Activated CD8-positive, alpha-beta memory T cell treated with anti-CD3 and anti-CD28 coated beads, Interleukin-2, amount 10 ng/mL, durations not matched to agents 7 days and 5 days (primary cell): ENCODE measurements at regions of chr1 and their contacts with region 1.

Region 1: DNA sequence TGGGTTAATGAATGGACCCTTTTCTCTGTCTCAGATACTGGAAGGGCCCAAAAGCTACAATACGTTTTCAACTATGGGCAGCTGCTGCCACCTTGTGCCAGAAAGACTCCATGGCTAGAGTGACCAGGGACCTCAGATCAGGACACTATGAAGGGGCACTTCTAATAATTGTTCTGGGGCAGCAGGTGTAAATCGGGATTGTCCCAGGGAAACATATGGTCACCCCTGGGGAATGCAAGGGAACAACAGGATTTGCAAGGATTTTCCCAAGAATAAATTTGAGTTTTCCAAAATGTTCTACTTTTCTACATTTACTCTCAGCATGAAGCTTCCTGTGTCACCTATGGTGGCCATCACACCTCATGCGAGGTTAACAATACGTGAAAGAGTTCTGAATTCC is 12.0 kb upstream of the FCAMR start:
- DNase-seq: peak; percentile 74
- ATAC-seq: peak; percentile 85
- H3K4me3 Mint-ChIP-seq: no peak overlapping the region
- H3K27ac Mint-ChIP-seq: no peak overlapping the region
- H3K4me1 Mint-ChIP-seq: no peaks in the 10 kb centered on the region
- H3K27me3 Mint-ChIP-seq: peaks cover 40% of the 10 kb centered on the region

Region 2: DNA sequence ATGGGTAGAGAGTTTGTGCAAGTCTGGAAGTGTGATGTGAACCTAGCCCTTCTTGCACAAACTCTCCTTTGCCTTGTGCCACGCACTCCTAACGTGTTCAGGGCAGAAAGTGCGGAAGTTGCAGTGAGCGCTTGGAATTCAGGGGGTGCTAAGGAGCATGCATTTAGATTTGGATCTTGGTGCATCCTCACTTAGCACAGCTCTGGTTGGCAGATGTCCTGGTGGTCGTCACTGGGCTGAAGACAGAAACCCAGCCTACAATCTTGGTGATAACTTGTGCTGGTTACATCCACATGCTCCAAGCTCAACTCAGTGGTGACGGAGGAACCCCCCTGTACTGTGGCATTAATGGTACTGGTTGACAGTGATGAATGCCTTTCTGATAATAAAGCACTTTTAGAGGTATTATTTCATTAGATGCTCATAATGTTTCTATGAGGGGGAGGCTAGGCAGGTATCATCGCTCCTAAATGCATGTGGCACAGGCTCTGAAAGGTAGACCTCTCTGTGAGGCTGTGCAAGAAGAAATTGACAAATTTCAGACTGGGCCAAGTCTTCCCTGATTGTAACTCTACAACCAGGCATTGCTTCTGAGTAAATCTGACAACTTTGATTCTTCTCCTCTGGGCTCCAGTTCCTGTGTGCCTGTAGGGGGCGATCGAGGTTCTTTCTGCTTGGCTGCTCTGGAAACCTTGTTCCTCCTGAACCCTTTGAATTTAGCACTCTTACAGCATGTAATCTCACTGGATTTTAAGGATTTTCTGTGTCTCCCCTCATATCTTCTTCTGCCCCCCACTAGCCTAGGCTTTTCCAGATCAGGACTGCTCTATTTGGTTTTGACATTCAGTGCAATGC is 256.9 kb before region 1 on chr1:
- CTCF ChIA-PET with region 1: interaction called, 11 read pairs
- DNase-seq: peak; percentile 77
- ATAC-seq: peak; percentile 65
- H3K4me3 Mint-ChIP-seq: no peak overlapping the region
- H3K27ac Mint-ChIP-seq: peak overlapping the region; percentile 24
- H3K4me1 Mint-ChIP-seq: peaks cover 59% of the 10 kb centered on the region
- H3K27me3 Mint-ChIP-seq: no peaks in the 10 kb centered on the region

Region 3: GRCh38 chr1:206808615-206809014 is 173.6 kb before region 1 on chr1:
- CTCF ChIA-PET with region 1: interaction called, 38 read pairs
- DNase-seq: peak; percentile 72
- ATAC-seq: peak; percentile 89
- H3K4me3 Mint-ChIP-seq: no peak overlapping the region
- H3K27ac Mint-ChIP-seq: peak overlapping the region; percentile 18
- H3K4me1 Mint-ChIP-seq: peaks cover 55% of the 10 kb centered on the region
- H3K27me3 Mint-ChIP-seq: peaks cover 2% of the 10 kb centered on the region

Region 4: DNA sequence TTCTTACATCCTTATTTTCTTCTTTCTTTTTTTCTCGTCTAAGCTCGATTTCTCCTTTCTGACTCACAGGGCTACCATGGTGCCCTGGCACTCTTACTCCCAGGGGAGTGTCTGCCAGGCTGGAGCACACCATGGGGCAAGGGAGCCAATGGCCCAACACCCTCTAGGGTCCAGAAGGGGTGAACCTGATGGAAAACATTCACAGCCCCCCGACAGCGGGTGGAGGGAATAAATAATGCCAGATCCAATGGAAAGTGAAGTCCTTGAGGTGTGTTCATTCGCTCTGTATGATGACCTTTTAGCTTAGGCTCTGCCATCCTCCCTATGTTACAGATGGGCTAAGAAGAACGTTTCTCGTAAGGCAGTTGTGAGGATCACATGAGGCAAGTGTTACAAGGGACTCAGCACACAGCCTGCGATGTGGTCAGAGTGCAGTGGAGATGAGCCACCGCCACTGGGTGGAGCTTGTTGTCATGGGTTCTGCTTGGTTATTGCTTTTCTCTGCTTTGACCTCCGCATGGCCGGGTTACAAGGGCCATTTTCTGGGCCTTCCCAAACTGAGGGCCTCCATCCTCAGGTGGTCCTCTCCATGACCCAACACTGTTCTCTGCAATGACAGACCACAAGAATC is 57.0 kb before region 1 on chr1:
- CTCF ChIA-PET with region 1: interaction called, 124 read pairs
- DNase-seq: peak; percentile 90
- ATAC-seq: peak; percentile 74
- H3K4me3 Mint-ChIP-seq: no peak overlapping the region
- H3K27ac Mint-ChIP-seq: no peak overlapping the region
- H3K4me1 Mint-ChIP-seq: peaks cover 8% of the 10 kb centered on the region
- H3K27me3 Mint-ChIP-seq: no peaks in the 10 kb centered on the region

Region 5: GRCh38 chr1:206941858-206942387 is 40.3 kb before region 1 on chr1:
- CTCF ChIA-PET with region 1: interaction called, 124 read pairs
- DNase-seq: no peak
- ATAC-seq: no peak
- H3K4me3 Mint-ChIP-seq: no peak overlapping the region
- H3K27ac Mint-ChIP-seq: no peak overlapping the region
- H3K4me1 Mint-ChIP-seq: peaks cover 5% of the 10 kb centered on the region
- H3K27me3 Mint-ChIP-seq: peaks cover 29% of the 10 kb centered on the region

Region 6: DNA sequence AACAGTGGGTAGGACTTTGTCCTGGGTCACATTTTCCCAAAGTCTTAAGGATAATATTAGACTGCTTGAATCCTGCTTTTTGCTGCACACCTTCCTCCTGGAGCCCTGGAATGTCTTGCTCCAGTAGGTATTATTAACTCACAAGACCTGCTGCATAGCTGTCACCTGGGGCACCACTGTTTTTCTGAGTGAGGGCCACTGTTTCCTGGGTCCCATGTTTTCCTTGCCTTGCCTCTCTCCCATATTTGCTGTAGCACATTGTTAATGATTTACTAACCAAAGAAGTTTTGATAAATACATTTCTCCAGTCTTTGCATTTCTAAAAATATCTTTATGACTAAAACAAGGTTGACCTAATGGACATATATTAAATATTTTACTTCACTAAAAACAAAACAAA is 10.6 kb after region 1 on chr1:
- CTCF ChIA-PET with region 1: interaction called, 16 read pairs
- DNase-seq: no peak
- ATAC-seq: no peak
- H3K4me3 Mint-ChIP-seq: no peak overlapping the region
- H3K27ac Mint-ChIP-seq: no peak overlapping the region
- H3K4me1 Mint-ChIP-seq: peaks cover 3% of the 10 kb centered on the region
- H3K27me3 Mint-ChIP-seq: peaks cover 74% of the 10 kb centered on the region